ENCODE measurements at regions of chr19 and their contacts with region 1.

Region 1: DNA sequence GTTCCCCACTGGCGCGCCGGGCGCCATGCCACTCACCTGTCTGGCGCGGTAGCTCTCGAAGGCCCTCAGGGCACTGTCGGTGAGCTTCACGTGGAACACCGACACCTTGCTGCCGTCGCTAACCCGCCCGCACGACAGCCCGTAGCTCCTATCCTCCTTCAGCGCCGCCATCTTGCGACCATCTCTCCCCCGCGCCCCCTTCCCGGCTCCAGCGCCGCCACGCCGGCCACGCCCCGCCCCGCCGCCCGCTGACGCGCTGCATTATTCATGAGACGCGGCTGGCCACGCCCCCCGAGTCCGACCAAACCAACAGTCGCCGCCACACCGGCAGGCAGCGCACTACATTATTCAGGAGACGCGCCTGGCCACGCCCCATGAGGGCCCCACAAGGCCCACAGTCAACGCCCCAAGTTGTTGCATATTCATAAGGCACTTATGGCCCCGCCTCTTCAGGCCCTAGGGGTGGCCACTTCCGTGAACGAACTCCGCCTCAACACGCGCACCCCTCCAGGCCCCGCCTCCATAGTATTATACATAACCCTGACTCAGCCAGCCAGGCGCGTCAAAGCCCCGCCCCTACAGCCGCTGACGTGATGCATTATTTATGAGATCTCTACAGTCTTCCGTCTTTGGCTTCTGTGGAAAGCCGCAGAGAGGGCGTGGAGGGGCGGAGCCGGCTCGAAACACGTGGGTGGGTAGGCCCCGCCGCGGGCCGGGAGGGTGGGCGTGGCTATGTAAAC is at the start of gene ELL:
- DNase-seq: peak; percentile 98 to 100 (median 100)
- ATAC-seq: peak; percentile 87
- H3K4me3 Mint-ChIP-seq: peak within 1 kb of the TSS; percentile 86 to 99 (median 94)
- H3K27ac Mint-ChIP-seq: peak within 1 kb of the TSS; percentile 93 to 99 (median 96)
- H3K4me1 Mint-ChIP-seq: peaks cover 7 to 33% (median 25%) of the 10 kb centered on the region in 4 donors
- H3K27me3 Mint-ChIP-seq: no peaks in the 10 kb centered on the region
- polyA plus RNA-seq, gene ELL: 7.6 to 11.0 (median 9.3) TPM

Region 2: GRCh38 chr19:18503971-18504885 is 17.8 kb before region 1 on chr19:
- POLR2A ChIA-PET with region 1: interaction called, 71 read pairs
- DNase-seq: no peak
- ATAC-seq: no peak
- H3K4me3 Mint-ChIP-seq: peak overlapping the region in 3 of 10 donors; percentile 7 to 76 (median 19)
- H3K27ac Mint-ChIP-seq: peak overlapping the region in 7 of 10 donors; percentile 18 to 95 (median 74)
- H3K4me1 Mint-ChIP-seq: peaks cover 55 to 99% (median 96%) of the 10 kb centered on the region in 4 donors
- H3K27me3 Mint-ChIP-seq: no peaks in the 10 kb centered on the region

Region 3: GRCh38 chr19:18542936-18543815 is 21.1 kb after region 1 on chr19 and contains the start of gene FKBP8:
- POLR2A ChIA-PET with region 1: interaction called, 15 read pairs
- DNase-seq: peak; percentile 85 to 96 (median 91)
- ATAC-seq: peak; percentile 98
- H3K4me3 Mint-ChIP-seq: peak within 1 kb of the TSS; percentile 86 to 94 (median 92)
- H3K27ac Mint-ChIP-seq: peak within 1 kb of the TSS; percentile 90 to 98 (median 95)
- H3K4me1 Mint-ChIP-seq: peaks cover 7 to 36% (median 30%) of the 10 kb centered on the region in 4 donors
- H3K27me3 Mint-ChIP-seq: no peaks in the 10 kb centered on the region
- polyA plus RNA-seq, gene FKBP8: 87.0 to 125 (median 106) TPM

Region 4: DNA sequence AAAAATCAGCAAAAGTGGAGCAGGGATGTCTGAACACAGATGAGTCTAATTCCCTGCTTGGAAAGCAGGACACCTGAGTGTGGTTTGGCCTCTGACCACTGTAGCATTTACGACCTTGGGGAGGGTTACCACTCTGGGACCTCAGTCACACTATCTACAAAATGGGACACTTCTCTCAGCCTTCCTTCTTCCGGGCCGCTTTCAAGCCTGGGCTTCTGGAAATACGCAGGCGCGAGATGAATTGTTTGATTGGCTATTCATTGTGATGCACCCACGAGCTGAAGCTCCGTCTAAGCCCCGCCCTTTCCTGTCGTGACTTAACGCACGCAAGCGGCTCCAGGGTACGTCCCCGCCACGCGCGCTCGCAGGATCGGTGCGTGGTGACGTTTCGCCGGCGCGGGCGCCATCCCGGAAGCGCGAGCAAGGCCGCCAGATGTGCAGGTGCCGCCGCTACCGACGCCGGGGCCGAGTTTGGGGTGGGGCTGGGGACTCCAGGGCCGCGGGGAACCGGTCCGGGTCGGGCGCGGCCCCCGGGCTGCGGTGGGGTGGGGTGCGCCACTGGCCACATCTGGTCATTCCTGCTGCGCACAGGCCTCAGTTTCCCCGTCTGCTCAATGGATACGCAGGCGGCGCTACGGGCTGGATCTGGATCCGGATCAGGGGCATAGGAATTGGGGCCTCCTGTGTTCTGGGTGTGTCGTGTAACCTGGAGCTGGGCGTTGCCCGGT is 35.6 kb after region 1 on chr19 and contains the start of gene KXD1:
- POLR2A ChIA-PET with region 1: interaction called, 40 read pairs
- DNase-seq: peak; percentile 90 to 99 (median 98)
- ATAC-seq: peak; percentile 98 to 99
- H3K4me3 Mint-ChIP-seq: peak within 1 kb of the TSS; percentile 80 to 94 (median 90)
- H3K27ac Mint-ChIP-seq: peak within 1 kb of the TSS; percentile 89 to 99 (median 95)
- H3K4me1 Mint-ChIP-seq: peaks cover 11 to 30% (median 21%) of the 10 kb centered on the region in 4 donors
- H3K27me3 Mint-ChIP-seq: no peaks in the 10 kb centered on the region
- polyA plus RNA-seq, gene KXD1: 68.3 to 80.2 (median 79.4) TPM